B cell (primary cell): ENCODE measurements at regions of chr6 and their contacts with region 1.

Region 1: GRCh38 chr6:107114213-107114905 is 956 bp downstream of the BEND3 start:
- DNase-seq: peak; percentile 87
- ATAC-seq: peak; percentile 64
- H3K4me3 ChIP-seq: peak overlapping the region; percentile 19 to 79 (median 54)
- H3K4me3 Mint-ChIP-seq: peak overlapping the region; percentile 86
- H3K27ac ChIP-seq: no peak overlapping the region
- H3K27ac Mint-ChIP-seq: peak overlapping the region; percentile 73
- H3K4me1 ChIP-seq: peaks cover 10 to 17% of the 10 kb centered on the region in 2 donors
- H3K4me1 Mint-ChIP-seq: peaks cover 18% of the 10 kb centered on the region
- H3K27me3 ChIP-seq: peaks cover 0 to 2% (median 0%) of the 10 kb centered on the region in 4 experiments
- H3K27me3 Mint-ChIP-seq: no peaks in the 10 kb centered on the region
- CTCF ChIP-seq: peak; percentile 93

Region 2: GRCh38 chr6:105902401-105903031 is 1211.8 kb before region 1 on chr6:
- CTCF ChIA-PET with region 1: no interaction called
- POLR2A ChIA-PET with region 1: no interaction called
- intact Hi-C with region 1: no loop called
- DNase-seq: no peak
- ATAC-seq: no peak
- H3K4me3 ChIP-seq: no peak overlapping the region
- H3K4me3 Mint-ChIP-seq: no peak overlapping the region
- H3K27ac ChIP-seq: no peak overlapping the region
- H3K27ac Mint-ChIP-seq: no peak overlapping the region
- H3K4me1 ChIP-seq: peaks cover 6 to 9% of the 10 kb centered on the region in 2 donors
- H3K4me1 Mint-ChIP-seq: peaks cover 11% of the 10 kb centered on the region
- H3K27me3 ChIP-seq: peaks cover 0 to 5% (median 0%) of the 10 kb centered on the region in 4 experiments
- H3K27me3 Mint-ChIP-seq: peaks cover 10% of the 10 kb centered on the region
- CTCF ChIP-seq: no peak

Region 3: DNA sequence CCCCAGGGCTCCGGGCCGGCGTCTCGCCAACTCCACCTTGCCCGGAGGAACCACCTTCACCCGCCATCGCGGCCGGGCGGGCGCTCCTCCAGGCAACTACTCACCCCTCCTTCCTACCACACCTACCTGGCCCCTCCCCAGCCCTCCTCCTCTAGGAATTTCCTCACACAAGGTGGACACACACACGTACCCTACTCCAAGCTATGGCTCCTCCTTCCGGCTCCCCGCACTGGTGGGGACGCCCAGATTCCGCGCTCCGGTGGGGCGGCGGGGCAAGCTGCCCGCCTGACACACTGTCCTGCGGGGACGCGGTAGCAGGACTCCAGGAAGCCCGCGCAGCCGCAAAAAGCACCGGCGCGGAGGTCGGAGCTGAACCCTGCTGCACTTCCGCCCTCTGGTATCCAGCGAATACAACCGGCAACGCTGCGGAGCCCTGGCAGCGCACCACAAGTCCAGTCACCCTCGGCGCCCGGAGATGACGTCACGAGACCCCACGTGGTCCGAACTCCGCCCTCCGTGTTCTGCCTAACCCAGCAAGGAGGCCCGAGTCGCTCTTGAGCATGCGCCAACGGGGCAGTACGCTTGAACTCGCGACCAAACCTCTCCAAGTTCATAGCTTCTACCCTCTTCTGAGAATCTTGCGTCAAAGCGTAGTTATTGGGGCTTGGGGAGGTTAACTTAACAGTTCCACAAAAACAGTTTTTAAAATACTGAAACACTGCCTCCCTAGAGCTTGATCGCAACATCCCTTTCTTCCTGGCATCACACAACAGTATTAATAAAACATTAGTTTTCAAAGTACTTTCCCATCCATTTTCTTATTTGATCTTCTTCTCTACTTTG is 788.8 kb before region 1 on chr6 and contains the start of gene ATG5:
- CTCF ChIA-PET with region 1: no interaction called
- POLR2A ChIA-PET with region 1: no interaction called
- intact Hi-C with region 1: loop called (anchors 10 kb)
- DNase-seq: peak; percentile 99
- ATAC-seq: peak; percentile 92
- H3K4me3 ChIP-seq: peak within 1 kb of the TSS; percentile 87 to 99 (median 94)
- H3K4me3 Mint-ChIP-seq: peak within 1 kb of the TSS; percentile 100
- H3K27ac ChIP-seq: peak within 1 kb of the TSS; percentile 89 to 91
- H3K27ac Mint-ChIP-seq: peak within 1 kb of the TSS; percentile 98
- H3K4me1 ChIP-seq: peaks cover 16 to 20% of the 10 kb centered on the region in 2 donors
- H3K4me1 Mint-ChIP-seq: peaks cover 44% of the 10 kb centered on the region
- H3K27me3 ChIP-seq: peaks cover 0 to 6% (median 4%) of the 10 kb centered on the region in 4 experiments
- H3K27me3 Mint-ChIP-seq: peaks cover 27% of the 10 kb centered on the region
- CTCF ChIP-seq: no peak
- total RNA-seq, gene ATG5: 26.3 and 34.0 TPM in 2 replicates

Region 4: DNA sequence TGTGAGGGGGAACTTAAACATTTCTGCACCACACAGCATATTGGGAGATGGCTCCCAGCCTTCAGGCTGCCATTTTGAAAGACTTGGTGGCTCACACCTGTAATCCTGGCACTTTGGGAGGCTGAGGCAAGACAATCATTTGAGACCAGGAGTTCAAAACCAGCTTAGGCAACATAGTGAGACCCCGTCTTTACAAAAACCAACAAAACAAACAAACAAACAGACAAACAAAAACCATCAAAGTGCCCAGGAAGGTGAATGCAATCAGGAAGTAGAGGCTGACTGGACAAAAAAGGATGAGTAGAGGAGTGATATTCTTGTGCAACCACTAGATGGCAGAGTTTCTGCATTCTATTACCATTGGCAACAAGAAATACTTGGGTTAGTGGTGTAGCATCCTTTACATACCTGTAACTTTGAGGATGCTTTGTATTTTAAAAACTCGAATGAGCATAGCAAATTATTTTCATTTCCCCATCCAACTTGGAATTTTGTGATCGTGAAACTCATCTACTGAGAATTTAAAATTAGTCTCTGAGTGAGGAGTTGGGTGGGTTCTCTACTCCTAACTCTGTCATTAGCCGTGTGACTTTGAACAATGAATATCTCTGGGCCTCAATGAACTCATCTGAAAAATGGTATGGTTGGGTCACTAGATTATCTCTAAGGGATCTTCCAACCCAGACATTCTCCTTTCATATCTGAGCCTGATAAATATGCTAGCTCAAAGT is 669.4 kb before region 1 on chr6:
- CTCF ChIA-PET with region 1: interaction called, 3 read pairs
- POLR2A ChIA-PET with region 1: no interaction called
- intact Hi-C with region 1: loop called (anchors 5 kb)
- DNase-seq: peak; percentile 79
- ATAC-seq: peak; percentile 59
- H3K4me3 ChIP-seq: no peak overlapping the region
- H3K4me3 Mint-ChIP-seq: no peak overlapping the region
- H3K27ac ChIP-seq: no peak overlapping the region
- H3K27ac Mint-ChIP-seq: peak overlapping the region; percentile 60
- H3K4me1 ChIP-seq: peaks cover 19 to 22% of the 10 kb centered on the region in 2 donors
- H3K4me1 Mint-ChIP-seq: peaks cover 20% of the 10 kb centered on the region
- H3K27me3 ChIP-seq: peaks cover 0 to 3% (median 0%) of the 10 kb centered on the region in 4 experiments
- H3K27me3 Mint-ChIP-seq: peaks cover 20% of the 10 kb centered on the region
- CTCF ChIP-seq: peak; percentile 92

Region 5: DNA sequence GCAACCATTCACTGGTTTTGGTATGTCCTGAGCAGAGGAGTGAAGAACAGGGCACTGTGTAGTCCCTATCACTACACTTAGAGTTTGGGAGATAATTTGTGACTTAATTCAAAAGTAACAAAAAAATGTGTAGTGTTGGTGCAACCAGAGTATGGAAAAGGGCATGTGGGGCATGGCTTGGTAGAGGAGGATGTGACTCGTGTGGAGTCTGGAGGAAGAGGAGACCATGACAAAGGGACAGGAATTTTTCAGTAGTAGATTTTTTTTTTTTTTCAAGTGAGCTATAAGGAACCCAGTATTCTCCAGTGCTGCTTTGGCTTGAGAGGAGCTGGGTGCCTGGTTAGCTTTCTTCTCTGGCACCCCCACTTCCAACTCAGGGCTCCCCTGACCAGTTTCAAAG is 81.2 kb before region 1 on chr6:
- CTCF ChIA-PET with region 1: interaction called, 7 read pairs
- POLR2A ChIA-PET with region 1: no interaction called
- intact Hi-C with region 1: loop called (anchors 1 kb)
- DNase-seq: no peak
- ATAC-seq: no peak
- H3K4me3 ChIP-seq: no peak overlapping the region
- H3K4me3 Mint-ChIP-seq: no peak overlapping the region
- H3K27ac ChIP-seq: no peak overlapping the region
- H3K27ac Mint-ChIP-seq: no peak overlapping the region
- H3K4me1 ChIP-seq: peaks cover 4 to 10% of the 10 kb centered on the region in 2 donors
- H3K4me1 Mint-ChIP-seq: peaks cover 20% of the 10 kb centered on the region
- H3K27me3 ChIP-seq: no peaks in the 10 kb centered on the region
- H3K27me3 Mint-ChIP-seq: no peaks in the 10 kb centered on the region
- CTCF ChIP-seq: no peak

Region 6: GRCh38 chr6:107489636-107490565 is 375.5 kb after region 1 on chr6 and contains the start of gene SOBP:
- CTCF ChIA-PET with region 1: no interaction called
- POLR2A ChIA-PET with region 1: no interaction called
- intact Hi-C with region 1: loop called (anchors 5 kb)
- DNase-seq: peak; percentile 77
- ATAC-seq: peak; percentile 65
- H3K4me3 ChIP-seq: peak within 1 kb of the TSS; percentile 51 to 78 (median 75)
- H3K4me3 Mint-ChIP-seq: peak within 1 kb of the TSS; percentile 93
- H3K27ac ChIP-seq: no peak within 1 kb of the TSS
- H3K27ac Mint-ChIP-seq: peak within 1 kb of the TSS; percentile 57
- H3K4me1 ChIP-seq: peaks cover 33 to 40% of the 10 kb centered on the region in 2 donors
- H3K4me1 Mint-ChIP-seq: peaks cover 32% of the 10 kb centered on the region
- H3K27me3 ChIP-seq: peaks cover 4 to 63% (median 49%) of the 10 kb centered on the region in 4 experiments
- H3K27me3 Mint-ChIP-seq: peaks cover 31% of the 10 kb centered on the region
- CTCF ChIP-seq: no peak
- total RNA-seq, gene SOBP: 1.3 and 1.5 TPM in 2 replicates

Region 7: GRCh38 chr6:108168501-108169463 is 1054.4 kb after region 1 on chr6:
- CTCF ChIA-PET with region 1: no interaction called
- POLR2A ChIA-PET with region 1: no interaction called
- intact Hi-C with region 1: loop called (anchors 10 kb)
- DNase-seq: peak; percentile 75
- ATAC-seq: peak; percentile 65
- H3K4me3 ChIP-seq: peak overlapping the region in 4 of 5 experiments; percentile 22 to 59 (median 40)
- H3K4me3 Mint-ChIP-seq: peak overlapping the region; percentile 79
- H3K27ac ChIP-seq: no peak overlapping the region
- H3K27ac Mint-ChIP-seq: no peak overlapping the region
- H3K4me1 ChIP-seq: peaks cover 70 to 80% of the 10 kb centered on the region in 2 donors
- H3K4me1 Mint-ChIP-seq: peaks cover 54% of the 10 kb centered on the region
- H3K27me3 ChIP-seq: peaks cover 3 to 95% (median 84%) of the 10 kb centered on the region in 4 experiments
- H3K27me3 Mint-ChIP-seq: peaks cover 70% of the 10 kb centered on the region
- CTCF ChIP-seq: peak; percentile 23